GM10248 (cell line): ENCODE measurements at regions of chr4 and their contacts with region 1.

Region 1: DNA sequence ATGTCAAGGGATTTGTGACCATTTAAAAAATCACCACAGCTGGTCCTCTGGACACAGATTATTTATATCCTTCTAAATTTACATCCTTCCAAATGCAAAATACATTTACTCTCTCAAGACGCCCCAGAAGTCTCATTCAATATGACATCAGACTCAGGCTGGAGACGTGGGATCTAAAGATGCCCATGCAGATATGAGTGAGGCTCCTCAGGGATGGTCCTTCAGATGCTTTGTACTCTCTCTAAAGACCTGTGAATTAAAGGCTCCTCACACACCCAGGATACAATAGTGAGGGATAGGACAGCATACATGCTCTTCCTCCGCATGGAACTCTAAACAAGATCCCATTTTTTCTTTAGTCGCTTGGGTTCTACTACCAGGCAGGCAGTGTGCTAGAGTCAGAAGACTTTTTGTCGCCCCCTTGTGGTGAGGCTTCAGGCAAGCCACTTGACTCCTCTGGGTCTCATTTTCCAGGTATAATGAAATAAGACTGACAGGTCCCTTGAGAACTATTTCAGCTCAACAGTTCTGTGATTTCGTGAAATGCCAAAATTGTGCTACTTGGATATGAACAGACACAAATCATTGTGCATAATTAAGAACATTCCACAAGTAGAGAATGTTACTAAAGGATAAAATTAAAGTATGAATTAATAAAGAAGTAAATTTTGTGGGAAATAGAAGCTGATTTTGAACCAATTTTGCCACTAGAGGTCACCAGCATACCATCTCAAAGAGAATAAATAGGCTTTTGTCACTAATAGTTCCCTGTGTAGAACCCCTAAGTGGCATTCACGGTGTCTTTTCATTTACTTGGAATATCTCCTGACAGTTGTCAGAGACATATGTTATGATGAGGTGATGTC is 13.7 kb upstream of the SCOC start:
- DNase-seq: peak; percentile 47
- CTCF ChIP-seq: peak; percentile 70

Region 2: GRCh38 chr4:139887962-139888735 is 471.6 kb before region 1 on chr4:
- CTCF ChIA-PET with region 1: no interaction called
- POLR2A ChIA-PET with region 1: no interaction called
- DNase-seq: peak; percentile 29
- CTCF ChIP-seq: no peak

Region 3: GRCh38 chr4:140343303-140343702 is 16.5 kb before region 1 on chr4:
- CTCF ChIA-PET with region 1: interaction called, 12 read pairs
- POLR2A ChIA-PET with region 1: no interaction called
- DNase-seq: no peak
- CTCF ChIP-seq: no peak

Region 4: GRCh38 chr4:140373328-140374129 is 13.7 kb after region 1 on chr4 and contains the start of gene SCOC:
- CTCF ChIA-PET with region 1: interaction called, 55 read pairs
- POLR2A ChIA-PET with region 1: no interaction called
- DNase-seq: peak; percentile 97
- CTCF ChIP-seq: no peak

Region 5: DNA sequence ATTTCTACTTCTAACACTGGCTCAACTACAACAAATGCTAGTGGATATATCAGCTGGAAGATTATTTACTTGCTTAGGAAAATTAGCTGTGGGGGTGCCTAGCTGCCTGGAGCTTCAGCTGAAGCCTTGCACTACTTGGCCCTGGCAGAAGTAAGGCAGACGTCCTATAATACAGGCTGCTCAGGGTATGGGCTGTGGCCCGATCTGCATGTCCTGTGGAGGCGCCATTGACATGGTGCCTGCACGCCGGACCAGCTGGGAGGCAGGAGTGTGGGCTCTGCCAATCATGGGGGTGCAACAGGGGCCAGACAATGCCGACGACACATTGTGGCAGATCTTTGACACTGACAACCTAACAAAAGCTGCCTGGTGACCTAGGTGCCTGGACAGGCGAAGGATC is 240.6 kb after region 1 on chr4:
- CTCF ChIA-PET with region 1: interaction called, 11 read pairs
- POLR2A ChIA-PET with region 1: no interaction called
- DNase-seq: no peak
- CTCF ChIP-seq: no peak

Region 6: DNA sequence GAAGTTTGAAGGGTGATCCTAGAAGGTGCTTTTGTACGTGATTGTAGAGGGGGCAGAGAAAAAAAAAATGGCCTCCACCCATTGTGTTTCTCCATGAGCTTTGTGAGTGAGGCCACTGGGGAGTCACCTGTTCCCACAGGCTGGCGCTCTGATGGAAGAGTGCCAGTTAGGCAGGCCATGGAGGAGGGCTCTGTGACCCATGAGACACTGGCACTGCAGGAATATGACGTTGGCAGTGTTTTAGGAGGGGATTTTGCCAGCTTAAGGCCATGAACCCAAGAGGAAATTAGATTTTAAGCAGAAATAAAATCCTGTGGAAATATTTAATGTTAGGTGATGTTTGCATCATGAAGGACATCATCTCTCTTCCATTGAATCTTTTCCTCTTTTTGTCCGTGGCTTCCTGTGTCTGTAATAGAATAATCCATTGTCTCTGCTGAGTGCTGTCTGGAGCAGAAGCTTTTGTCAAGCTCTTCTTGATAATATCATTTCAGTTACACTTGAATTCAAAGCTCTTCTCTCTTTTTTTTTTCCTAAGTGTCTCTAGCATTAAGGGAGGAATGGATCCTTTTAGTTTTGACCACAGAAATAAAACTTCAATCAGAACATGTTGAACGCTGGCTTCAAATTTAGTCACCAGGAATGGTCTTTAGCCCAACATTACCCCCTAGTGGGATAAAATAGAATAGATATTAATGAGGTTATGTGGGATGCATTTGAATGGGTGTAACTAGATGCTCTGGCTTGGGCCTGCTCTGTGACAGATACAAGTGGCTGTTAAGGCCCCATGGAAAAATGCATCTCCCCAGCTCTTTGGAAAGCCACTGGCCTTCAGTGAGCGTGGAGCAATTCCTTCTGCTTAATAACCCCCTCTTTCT is 250.0 kb after region 1 on chr4:
- CTCF ChIA-PET with region 1: interaction called, 65 read pairs
- POLR2A ChIA-PET with region 1: interaction called, 3 read pairs
- DNase-seq: peak; percentile 66
- CTCF ChIP-seq: peak; percentile 45

Region 7: GRCh38 chr4:140637836-140638235 is 278.0 kb after region 1 on chr4:
- CTCF ChIA-PET with region 1: interaction called, 12 read pairs
- POLR2A ChIA-PET with region 1: no interaction called
- DNase-seq: peak; percentile 56
- CTCF ChIP-seq: peak; percentile 61

Region 8: DNA sequence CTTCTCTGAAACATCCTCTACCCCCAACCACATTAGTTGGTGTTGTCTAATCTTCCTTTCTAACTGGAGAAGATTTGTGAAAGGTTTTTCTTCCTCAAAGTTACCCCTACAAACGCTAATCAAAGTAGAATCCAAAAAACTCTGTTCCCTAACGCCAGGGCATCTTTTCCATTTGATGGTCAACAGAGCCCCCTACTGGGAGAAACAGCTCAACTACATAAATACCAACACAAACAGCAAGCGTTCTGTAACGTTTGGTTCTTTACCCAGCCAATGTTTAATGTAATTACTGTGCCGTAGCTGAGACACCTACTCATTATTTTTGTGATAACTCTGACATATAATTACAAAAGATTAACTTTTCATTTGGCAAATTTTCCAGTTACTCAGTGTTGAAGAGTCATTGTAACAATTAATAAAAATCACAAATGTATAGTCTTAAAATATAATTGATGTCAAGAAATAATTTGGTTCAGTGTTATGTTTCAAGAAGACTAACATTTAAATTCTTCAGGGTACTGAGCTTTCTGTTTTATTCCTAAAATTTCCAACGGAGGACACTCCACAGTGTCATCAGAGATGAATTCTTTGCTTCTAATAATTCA is 491.3 kb after region 1 on chr4:
- CTCF ChIA-PET with region 1: interaction called, 17 read pairs
- POLR2A ChIA-PET with region 1: no interaction called
- DNase-seq: peak; percentile 64
- CTCF ChIP-seq: peak; percentile 75